ENCODE measurements at regions of chrX and their contacts with region 1.

Region 1: GRCh38 chrX:14533867-14534266 is 4.5 kb downstream of the GLRA2 start:
- DNase-seq: no peak
- ATAC-seq: no peak
- H3K4me3 ChIP-seq: no peak overlapping the region
- H3K27ac ChIP-seq: no peak overlapping the region
- H3K4me1 ChIP-seq: no peaks in the 10 kb centered on the region
- H3K27me3 ChIP-seq: no peaks in the 10 kb centered on the region
- CTCF ChIP-seq: no peak
- POLR2A ChIP-seq: no peak
- RAD21 ChIP-seq: no peak

Region 2: GRCh38 chrX:14573146-14573545 is 39.3 kb after region 1 on chrX:
- CTCF ChIA-PET with region 1: no interaction called
- POLR2A ChIA-PET with region 1: no interaction called
- RAD21 ChIA-PET with region 1: no interaction called
- intact Hi-C with region 1: loop called (anchors 1 kb)
- DNase-seq: no peak
- ATAC-seq: no peak
- H3K4me3 ChIP-seq: no peak overlapping the region
- H3K27ac ChIP-seq: no peak overlapping the region
- H3K4me1 ChIP-seq: no peaks in the 10 kb centered on the region
- H3K27me3 ChIP-seq: no peaks in the 10 kb centered on the region
- CTCF ChIP-seq: no peak
- POLR2A ChIP-seq: no peak
- RAD21 ChIP-seq: no peak

Measured in HCT116 (cell line).